HEK293 (cell line): ENCODE measurements at regions of chr5 and their contacts with region 1.

Region 1: DNA sequence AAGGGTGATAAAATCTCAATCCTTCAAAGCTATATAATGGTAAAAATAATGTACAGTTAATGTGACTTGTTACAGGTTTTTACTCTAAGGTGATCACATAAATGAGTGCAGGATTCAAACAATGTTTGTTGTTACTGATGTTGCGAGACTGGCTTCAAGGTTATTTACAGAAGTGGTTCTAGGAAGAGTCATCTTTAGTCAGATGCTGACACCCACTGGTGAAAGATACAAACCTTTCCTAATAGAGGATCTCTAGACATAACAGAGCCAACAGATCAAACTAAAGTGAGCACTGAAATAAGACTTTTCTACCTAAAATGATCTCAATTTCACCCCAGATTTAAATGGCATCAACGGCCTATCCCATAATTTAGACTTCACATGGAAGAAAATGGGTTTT is 20.2 kb downstream of the ARSB start:
- H3K4me3 ChIP-seq: no peak overlapping the region
- H3K27ac ChIP-seq: no peak overlapping the region
- H3K4me1 ChIP-seq: no peaks in the 10 kb centered on the region
- CTCF ChIP-seq: 0 out of 2 replicates have a peak, but pooled peaks have one; percentile 41

Region 2: DNA sequence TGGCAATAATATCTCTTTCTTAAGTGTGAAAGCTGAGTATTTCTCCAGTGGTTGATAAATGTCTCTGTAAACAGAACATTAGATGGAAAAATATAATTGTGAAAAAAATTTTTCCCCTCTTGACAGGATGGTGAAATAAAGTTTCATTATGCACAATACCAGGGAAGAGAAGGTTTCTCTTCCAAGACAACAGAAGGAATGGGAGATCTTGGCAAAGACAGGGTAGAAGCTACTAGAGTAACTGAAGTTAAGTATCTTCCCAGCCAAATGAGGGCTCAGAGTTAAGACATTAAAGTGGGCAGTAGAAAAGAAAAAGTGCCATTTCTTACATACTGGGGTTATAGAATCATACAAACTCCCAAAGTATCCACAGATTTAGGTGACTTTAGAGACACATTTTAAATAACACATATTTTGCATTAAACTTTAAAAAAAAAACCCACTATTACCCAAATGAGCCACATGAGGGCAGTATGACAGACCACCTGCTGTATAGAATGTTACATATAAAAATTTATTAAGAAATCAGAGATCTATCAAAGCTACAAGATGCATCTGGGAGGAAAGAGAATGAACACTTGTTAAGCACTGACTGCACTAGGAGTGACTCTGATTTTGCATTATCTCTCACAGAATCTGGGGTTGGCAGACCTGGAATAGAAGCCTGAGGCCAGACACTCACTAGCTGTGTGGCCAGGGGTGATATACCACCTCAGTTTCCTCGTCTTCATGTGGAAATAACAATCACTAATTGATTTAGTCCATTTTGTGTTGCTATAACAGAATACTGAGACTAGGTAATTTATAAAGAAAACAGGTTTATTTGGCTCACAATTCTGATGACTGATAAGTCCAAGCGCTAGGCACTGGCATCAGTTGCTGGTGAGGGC is 78.3 kb before region 1 on chr5:
- CTCF ChIA-PET with region 1: interaction called, 16 read pairs
- POLR2A ChIA-PET with region 1: no interaction called
- H3K4me3 ChIP-seq: no peak overlapping the region
- H3K27ac ChIP-seq: no peak overlapping the region
- H3K4me1 ChIP-seq: no peaks in the 10 kb centered on the region
- CTCF ChIP-seq: no peak

Region 3: GRCh38 chr5:78984439-78985115 is 19.7 kb after region 1 on chr5:
- CTCF ChIA-PET with region 1: interaction called, 11 read pairs
- POLR2A ChIA-PET with region 1: no interaction called
- H3K4me3 ChIP-seq: peak overlapping the region; percentile 81
- H3K27ac ChIP-seq: peak overlapping the region; percentile 98
- H3K4me1 ChIP-seq: peaks cover 8% of the 10 kb centered on the region
- CTCF ChIP-seq: peak; percentile 44